Activated CD4-positive, alpha-beta T cell treated with anti-CD3 and anti-CD28 coated beads for 36 hours (primary cell): ENCODE measurements at regions of chr1 and their contacts with region 1.

Region 1: GRCh38 chr1:23959041-23959460 is 577 bp upstream of the PNRC2 start:
- DNase-seq: peak; percentile 97
- ATAC-seq: peak; percentile 82
- H3K4me3 Mint-ChIP-seq: peak overlapping the region; percentile 100
- H3K27ac Mint-ChIP-seq: peak overlapping the region; percentile 100
- H3K4me1 Mint-ChIP-seq: peaks cover 53% of the 10 kb centered on the region
- H3K27me3 Mint-ChIP-seq: no peaks in the 10 kb centered on the region

Region 2: GRCh38 chr1:23559136-23559984 is 399.7 kb before region 1 on chr1 and contains the start of gene ID3:
- CTCF ChIA-PET with region 1: no interaction called
- POLR2A ChIA-PET with region 1: no interaction called
- intact Hi-C with region 1: loop called in 1 of 2 experiments (anchors 5 kb)
- DNase-seq: peak; percentile 96
- ATAC-seq: peak; percentile 71
- H3K4me3 Mint-ChIP-seq: peak within 1 kb of the TSS; percentile 94
- H3K27ac Mint-ChIP-seq: peak within 1 kb of the TSS; percentile 79
- H3K4me1 Mint-ChIP-seq: peaks cover 58% of the 10 kb centered on the region
- H3K27me3 Mint-ChIP-seq: peaks cover 5% of the 10 kb centered on the region
- total RNA-seq, gene ID3: 42.6 to 43.9 TPM

Region 3: DNA sequence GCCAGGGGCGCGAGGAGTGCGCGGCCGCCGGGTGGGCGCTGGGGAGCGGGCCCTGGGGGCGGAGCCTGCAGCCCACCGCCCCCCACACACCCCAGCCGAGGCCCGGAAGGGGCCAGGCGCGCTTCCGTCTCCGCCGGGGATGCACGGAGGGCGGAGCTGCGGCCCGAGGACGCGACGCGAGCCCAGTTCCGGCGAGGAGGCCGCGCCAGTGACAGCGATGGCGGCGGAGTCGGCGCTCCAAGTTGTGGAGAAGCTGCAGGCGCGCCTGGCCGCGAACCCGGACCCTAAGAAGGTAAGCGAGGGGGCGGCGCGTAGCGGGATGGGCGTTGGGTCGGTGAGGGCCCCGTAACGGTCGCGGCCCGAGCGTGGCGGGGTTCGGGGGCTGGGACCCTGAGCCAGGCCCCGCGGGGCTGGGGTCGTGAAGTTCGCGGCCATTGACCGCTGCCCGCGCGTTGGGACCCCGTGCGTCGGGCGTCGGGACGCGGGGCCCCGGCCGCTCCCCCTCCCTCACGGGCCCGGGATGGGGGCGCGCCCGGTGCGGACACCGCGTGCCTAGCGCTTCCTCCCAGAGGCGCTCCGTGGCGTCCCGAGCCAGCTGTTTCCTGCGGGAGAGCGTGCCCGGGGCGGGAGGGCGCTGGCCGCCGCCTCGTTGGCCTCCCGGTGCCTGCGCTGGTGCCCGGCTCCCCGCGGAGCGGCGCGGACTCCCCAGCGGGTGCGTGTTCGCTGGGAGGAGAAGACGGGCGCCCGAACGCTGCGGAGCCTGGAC is 215.6 kb before region 1 on chr1 and contains the start of gene ELOA:
- CTCF ChIA-PET with region 1: no interaction called
- POLR2A ChIA-PET with region 1: no interaction called
- intact Hi-C with region 1: loop called in 1 of 2 experiments (anchors 1 kb)
- DNase-seq: peak; percentile 88
- ATAC-seq: peak; percentile 94
- H3K4me3 Mint-ChIP-seq: peak within 1 kb of the TSS; percentile 87
- H3K27ac Mint-ChIP-seq: peak within 1 kb of the TSS; percentile 91
- H3K4me1 Mint-ChIP-seq: peaks cover 42% of the 10 kb centered on the region
- H3K27me3 Mint-ChIP-seq: no peaks in the 10 kb centered on the region
- total RNA-seq, gene ELOA: 34.5 to 38.6 TPM

Region 4: DNA sequence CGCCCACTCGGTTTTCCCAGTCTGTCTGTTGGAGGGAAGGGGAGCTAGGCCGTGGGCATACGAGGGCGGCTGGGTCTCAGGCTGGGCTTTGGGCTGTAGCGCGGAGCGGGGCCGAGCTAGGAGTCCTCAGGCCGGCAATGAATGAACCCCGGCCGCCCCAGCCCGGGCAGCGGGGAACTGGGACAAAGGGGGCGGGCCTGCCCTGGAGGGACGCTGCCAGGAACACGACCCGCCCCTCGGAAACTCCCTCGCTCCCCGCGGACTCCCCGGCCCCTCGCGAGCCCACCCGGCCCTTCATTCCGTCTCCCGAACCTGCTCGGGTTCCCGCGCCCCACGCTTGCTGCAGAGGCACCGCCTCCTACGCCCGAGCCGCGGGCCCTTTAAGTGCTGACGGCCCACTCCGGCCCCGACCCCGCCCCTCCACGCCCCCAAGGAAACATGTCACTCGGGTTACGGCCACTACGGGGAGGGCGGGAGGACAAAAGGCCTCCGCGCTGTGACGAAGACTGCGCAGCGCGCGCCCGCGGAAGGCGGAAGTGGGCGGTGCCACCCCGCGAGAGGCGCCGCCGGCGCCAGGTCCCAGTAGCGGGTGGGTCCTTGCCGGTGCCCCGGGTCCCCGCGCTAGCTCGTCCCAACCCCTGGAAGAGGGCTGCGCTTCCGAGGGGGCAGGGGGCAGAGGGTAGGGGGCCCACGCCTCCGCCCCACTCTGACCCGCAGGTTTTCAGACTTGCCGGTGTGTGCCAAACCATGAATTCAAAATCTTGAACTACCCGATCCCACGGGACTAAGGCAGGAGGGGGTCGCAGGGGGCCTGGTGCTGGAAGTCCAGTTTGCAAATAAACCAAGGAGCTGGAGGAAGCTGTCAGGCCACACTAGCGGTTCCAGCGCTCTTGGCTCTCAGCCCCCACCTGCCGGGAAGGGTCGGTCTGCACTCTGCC is 158.4 kb before region 1 on chr1 and contains the start of gene GALE:
- CTCF ChIA-PET with region 1: no interaction called
- POLR2A ChIA-PET with region 1: no interaction called
- intact Hi-C with region 1: loop called (anchors 1 to 10 kb)
- DNase-seq: peak; percentile 99
- ATAC-seq: peak; percentile 84
- H3K4me3 Mint-ChIP-seq: peak within 1 kb of the TSS; percentile 86
- H3K27ac Mint-ChIP-seq: peak within 1 kb of the TSS; percentile 84
- H3K4me1 Mint-ChIP-seq: peaks cover 13% of the 10 kb centered on the region
- H3K27me3 Mint-ChIP-seq: no peaks in the 10 kb centered on the region
- total RNA-seq, gene GALE: 27.4 to 35.6 TPM

Region 5: GRCh38 chr1:23867953-23868556 is 91.0 kb before region 1 on chr1 and contains the start of gene FUCA1:
- CTCF ChIA-PET with region 1: no interaction called
- POLR2A ChIA-PET with region 1: no interaction called
- intact Hi-C with region 1: loop called in 1 of 2 experiments (anchors 1 kb)
- DNase-seq: peak; percentile 95
- ATAC-seq: peak; percentile 97
- H3K4me3 Mint-ChIP-seq: peak within 1 kb of the TSS; percentile 76
- H3K27ac Mint-ChIP-seq: peak within 1 kb of the TSS; percentile 77
- H3K4me1 Mint-ChIP-seq: peaks cover 19% of the 10 kb centered on the region
- H3K27me3 Mint-ChIP-seq: no peaks in the 10 kb centered on the region
- total RNA-seq, gene FUCA1: 4.2 to 4.5 TPM

Region 6: DNA sequence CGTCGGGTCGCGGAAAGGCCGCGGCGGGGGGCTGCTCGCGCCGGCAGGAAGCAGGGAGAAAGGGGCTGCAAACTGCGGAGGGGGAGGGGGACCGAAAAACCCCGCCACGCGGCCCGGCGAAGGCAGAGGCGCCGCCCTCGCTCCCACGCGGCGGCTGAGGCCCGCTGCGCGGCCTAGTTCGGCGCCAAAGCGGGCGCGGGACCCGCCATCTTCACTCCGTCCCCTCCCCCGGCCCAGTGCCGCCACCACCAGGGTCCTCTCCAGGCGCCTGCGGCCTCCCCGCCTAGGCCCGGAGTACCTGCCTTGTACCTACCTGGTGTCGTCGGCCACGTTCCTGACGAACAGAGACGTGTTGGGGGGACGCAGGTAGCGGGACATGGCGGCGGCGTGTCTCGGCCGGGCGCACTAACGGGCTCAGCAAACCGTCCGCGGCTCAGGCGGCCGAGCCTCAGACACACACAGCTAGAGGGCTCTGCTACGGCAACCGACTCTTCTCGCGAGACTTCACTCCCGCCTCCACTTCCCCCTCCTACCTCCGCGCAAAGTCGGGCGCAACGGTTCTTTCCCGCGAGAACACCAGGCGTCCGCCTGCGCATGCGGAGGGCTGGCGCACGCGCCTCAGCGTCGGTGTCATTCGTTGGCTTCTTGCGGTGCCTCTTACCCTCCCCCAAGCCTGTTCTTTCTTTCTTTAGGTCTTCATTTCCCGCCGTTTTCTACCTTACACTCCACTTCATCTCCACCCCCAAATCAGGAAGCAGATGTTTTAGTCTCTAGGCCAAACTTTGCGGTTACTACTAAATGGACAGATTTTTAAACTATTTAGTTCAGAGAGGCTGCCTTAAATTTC is 21.1 kb after region 1 on chr1 and contains the start of gene SRSF10:
- CTCF ChIA-PET with region 1: interaction called, 10 read pairs
- POLR2A ChIA-PET with region 1: interaction called, 20 read pairs
- intact Hi-C with region 1: loop called (anchors 1 kb)
- DNase-seq: peak; percentile 99
- ATAC-seq: peak; percentile 94
- H3K4me3 Mint-ChIP-seq: peak within 1 kb of the TSS; percentile 97
- H3K27ac Mint-ChIP-seq: peak within 1 kb of the TSS; percentile 100
- H3K4me1 Mint-ChIP-seq: peaks cover 38% of the 10 kb centered on the region
- H3K27me3 Mint-ChIP-seq: no peaks in the 10 kb centered on the region
- total RNA-seq, gene SRSF10: 213 to 225 TPM

Region 7: DNA sequence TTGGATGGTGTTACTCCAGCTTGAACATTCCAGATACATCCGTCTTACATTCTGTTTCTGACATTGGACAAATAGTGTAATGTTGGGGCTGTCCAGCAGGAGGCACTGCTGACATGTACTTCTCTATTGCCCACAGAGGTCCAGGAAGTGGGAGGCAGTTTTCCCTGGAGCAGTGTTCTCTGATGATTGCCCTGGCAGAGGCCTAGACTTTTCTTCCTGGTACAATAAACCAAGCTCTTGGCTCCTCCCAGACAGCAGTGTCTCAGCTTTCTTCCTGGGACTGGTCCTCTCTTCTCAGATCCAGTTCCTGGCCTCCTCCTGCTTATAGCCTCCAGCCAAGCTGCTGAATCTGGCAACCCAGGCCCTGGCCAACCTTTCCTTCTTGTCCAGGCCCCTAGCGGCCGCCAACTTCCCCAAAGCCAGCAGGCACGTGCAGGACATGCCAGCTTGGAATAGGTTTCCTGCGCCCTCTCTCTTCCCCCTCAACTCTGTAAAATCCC is 242.9 kb after region 1 on chr1:
- CTCF ChIA-PET with region 1: no interaction called
- POLR2A ChIA-PET with region 1: no interaction called
- intact Hi-C with region 1: no loop called
- DNase-seq: peak; percentile 78
- ATAC-seq: no peak
- H3K4me3 Mint-ChIP-seq: no peak overlapping the region
- H3K27ac Mint-ChIP-seq: no peak overlapping the region
- H3K4me1 Mint-ChIP-seq: peaks cover 27% of the 10 kb centered on the region
- H3K27me3 Mint-ChIP-seq: peaks cover 2% of the 10 kb centered on the region

Region 8: GRCh38 chr1:24329797-24330543 is 370.9 kb after region 1 on chr1:
- CTCF ChIA-PET with region 1: no interaction called
- POLR2A ChIA-PET with region 1: no interaction called
- intact Hi-C with region 1: no loop called
- DNase-seq: no peak
- ATAC-seq: no peak
- H3K4me3 Mint-ChIP-seq: no peak overlapping the region
- H3K27ac Mint-ChIP-seq: no peak overlapping the region
- H3K4me1 Mint-ChIP-seq: no peaks in the 10 kb centered on the region
- H3K27me3 Mint-ChIP-seq: peaks cover 34% of the 10 kb centered on the region

Region 9: DNA sequence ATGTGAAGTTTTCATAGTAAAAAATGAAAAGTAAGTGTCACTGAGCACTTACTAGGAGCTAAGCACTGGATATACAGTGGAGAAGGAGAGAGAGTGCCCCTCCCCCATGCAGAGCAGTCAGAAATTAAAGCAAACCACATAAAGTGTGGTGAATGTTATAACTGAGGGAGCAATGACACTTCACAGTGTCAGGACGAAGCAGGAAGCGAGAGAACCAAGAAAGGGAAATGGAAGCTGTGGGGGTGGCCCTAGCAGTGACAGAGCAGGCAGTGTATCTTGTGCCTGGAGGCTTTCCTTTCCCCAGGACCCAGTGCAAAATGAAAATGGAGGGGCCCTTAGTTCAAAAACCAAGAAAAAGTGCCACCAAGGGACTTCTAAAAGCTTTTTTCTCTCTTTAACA is 522.0 kb after region 1 on chr1:
- CTCF ChIA-PET with region 1: no interaction called
- POLR2A ChIA-PET with region 1: no interaction called
- intact Hi-C with region 1: loop called in 1 of 2 experiments (anchors 5 kb)
- DNase-seq: peak; percentile 81
- ATAC-seq: peak; percentile 76
- H3K4me3 Mint-ChIP-seq: peak overlapping the region; percentile 60
- H3K27ac Mint-ChIP-seq: peak overlapping the region; percentile 97
- H3K4me1 Mint-ChIP-seq: peaks cover 65% of the 10 kb centered on the region
- H3K27me3 Mint-ChIP-seq: no peaks in the 10 kb centered on the region